IMR-90 (cell line): ENCODE measurements at regions of chr1 and their contacts with region 1.

Region 1: DNA sequence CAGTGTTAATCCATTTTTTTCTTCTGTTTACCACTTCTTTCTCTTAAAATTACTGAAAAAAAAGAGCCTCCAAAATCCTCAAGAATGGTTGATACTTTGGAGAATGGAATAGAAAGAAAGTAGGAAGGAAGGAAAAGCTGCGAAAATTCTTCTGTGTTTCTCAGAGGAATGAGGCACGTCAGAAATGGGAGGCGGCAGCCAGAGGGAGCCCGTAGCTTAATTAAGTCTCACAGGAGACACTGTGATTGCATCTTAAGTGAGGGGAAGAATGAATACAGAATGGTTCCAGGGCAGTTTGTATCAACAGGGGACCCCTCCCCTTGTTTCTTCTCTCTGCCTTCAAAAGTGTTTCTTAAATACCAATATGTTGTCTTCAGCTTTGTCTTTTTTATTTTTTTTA is 1099.5 kb downstream of the PLA2G4A start:
- DNase-seq: peak; percentile 36
- ATAC-seq: peak; percentile 57
- H3K4me3 ChIP-seq: no peak overlapping the region
- H3K27ac ChIP-seq: no peak overlapping the region
- H3K4me1 ChIP-seq: no peaks in the 10 kb centered on the region
- H3K27me3 ChIP-seq: no peaks in the 10 kb centered on the region
- CTCF ChIP-seq: peak; percentile 64
- POLR2A ChIP-seq: no peak
- RAD21 ChIP-seq: peak; percentile 71

Region 2: DNA sequence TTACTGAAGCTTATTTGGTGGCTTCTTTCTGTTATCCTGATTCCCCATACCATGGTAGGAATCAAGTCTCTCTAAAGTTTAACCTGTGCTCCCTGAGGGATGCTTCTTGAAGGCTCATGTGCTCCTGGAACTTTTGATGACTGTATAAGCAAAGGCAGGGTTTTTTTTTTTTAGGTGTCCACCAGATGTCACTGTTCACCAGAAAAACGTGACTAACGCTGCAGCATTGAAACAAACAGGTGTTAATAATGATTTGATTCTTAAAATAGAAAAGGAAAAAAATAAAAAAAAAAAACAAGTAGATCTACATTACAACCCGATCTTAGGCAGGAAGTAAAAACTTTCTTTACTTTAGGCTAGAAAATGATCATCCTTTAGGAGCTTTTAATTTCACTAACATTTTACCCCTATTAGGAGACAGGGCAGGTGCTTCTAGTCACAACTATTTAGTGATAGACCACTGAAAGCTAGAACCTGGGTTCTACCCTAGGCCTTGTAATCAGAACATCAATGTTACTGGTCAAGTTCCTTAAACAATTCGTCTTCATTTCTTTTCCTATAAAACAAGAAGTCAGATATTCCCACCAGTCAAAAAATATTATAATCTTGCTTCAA is 876.6 kb before region 1 on chr1:
- CTCF ChIA-PET with region 1: no interaction called
- POLR2A ChIA-PET with region 1: no interaction called
- dilution Hi-C with region 1: no loop called
- in situ Hi-C with region 1: no loop called
- intact Hi-C with region 1: loop called (anchors 5 kb)
- DNase-seq: peak; percentile 58
- ATAC-seq: no peak
- H3K4me3 ChIP-seq: no peak overlapping the region
- H3K27ac ChIP-seq: no peak overlapping the region
- H3K4me1 ChIP-seq: no peaks in the 10 kb centered on the region
- H3K27me3 ChIP-seq: peaks cover 1% of the 10 kb centered on the region; the same call in 1 of the 2 replicates
- CTCF ChIP-seq: peak; percentile 54
- POLR2A ChIP-seq: no peak
- RAD21 ChIP-seq: peak; percentile 67

Region 3: DNA sequence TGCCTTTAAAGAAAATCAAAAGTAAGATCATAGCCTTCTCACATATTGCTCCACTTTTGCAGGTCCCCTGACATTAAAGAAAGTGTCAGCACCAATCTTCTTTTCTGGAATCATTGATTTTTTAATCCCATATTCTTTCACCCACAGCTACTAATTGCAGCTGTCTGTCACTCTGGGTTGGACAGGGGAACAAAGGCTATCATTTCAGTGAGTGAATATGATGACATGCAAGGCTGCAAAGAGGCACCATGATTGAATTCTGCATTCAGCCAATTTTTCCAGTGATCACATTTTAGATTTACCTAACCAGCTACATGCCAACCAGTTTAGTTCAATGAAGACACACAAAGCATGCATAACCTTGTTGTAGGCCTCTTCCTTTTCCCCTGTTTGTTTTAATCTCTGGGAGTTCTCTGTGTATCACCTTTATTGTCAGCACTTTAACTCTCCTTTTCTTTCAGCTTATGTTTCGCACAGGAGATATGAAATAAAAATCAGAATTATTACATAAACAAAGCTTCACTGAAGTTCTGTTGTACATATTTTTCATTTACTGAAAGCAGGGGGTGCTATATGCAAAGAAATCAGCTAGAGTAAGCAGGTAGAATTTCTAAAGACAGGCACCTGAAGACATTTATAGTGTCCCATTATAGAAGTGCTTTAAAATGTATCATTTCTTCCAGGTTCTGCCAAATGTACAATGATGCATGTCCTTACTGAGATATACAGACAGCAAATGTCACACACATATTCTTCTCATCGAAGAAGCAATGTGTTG is 514.7 kb before region 1 on chr1:
- CTCF ChIA-PET with region 1: no interaction called
- POLR2A ChIA-PET with region 1: no interaction called
- dilution Hi-C with region 1: no loop called
- in situ Hi-C with region 1: no loop called
- intact Hi-C with region 1: loop called (anchors 10 kb)
- DNase-seq: peak; percentile 34
- ATAC-seq: no peak
- H3K4me3 ChIP-seq: no peak overlapping the region
- H3K27ac ChIP-seq: no peak overlapping the region
- H3K4me1 ChIP-seq: peaks cover 5% of the 10 kb centered on the region
- H3K27me3 ChIP-seq: no peaks in the 10 kb centered on the region
- CTCF ChIP-seq: peak; percentile 40
- POLR2A ChIP-seq: no peak
- RAD21 ChIP-seq: peak; percentile 66

Region 4: GRCh38 chr1:187476671-187477070 is 451.6 kb before region 1 on chr1:
- CTCF ChIA-PET with region 1: no interaction called
- POLR2A ChIA-PET with region 1: no interaction called
- dilution Hi-C with region 1: no loop called
- in situ Hi-C with region 1: no loop called
- intact Hi-C with region 1: loop called (anchors 10 kb)
- DNase-seq: peak; percentile 20
- ATAC-seq: 0 out of 2 replicates have a peak, but pooled peaks have one; percentile 53
- H3K4me3 ChIP-seq: no peak overlapping the region
- H3K27ac ChIP-seq: no peak overlapping the region
- H3K4me1 ChIP-seq: peaks cover 2% of the 10 kb centered on the region; the same call in 1 of the 2 replicates
- H3K27me3 ChIP-seq: no peaks in the 10 kb centered on the region
- CTCF ChIP-seq: peak; percentile 49
- POLR2A ChIP-seq: no peak
- RAD21 ChIP-seq: peak; percentile 43

Region 5: GRCh38 chr1:187971851-187972250 is 43.6 kb after region 1 on chr1:
- CTCF ChIA-PET with region 1: no interaction called
- POLR2A ChIA-PET with region 1: no interaction called
- dilution Hi-C with region 1: no loop called
- in situ Hi-C with region 1: no loop called
- intact Hi-C with region 1: no loop called
- DNase-seq: no peak
- ATAC-seq: no peak
- H3K4me3 ChIP-seq: no peak overlapping the region
- H3K27ac ChIP-seq: no peak overlapping the region
- H3K4me1 ChIP-seq: no peaks in the 10 kb centered on the region
- H3K27me3 ChIP-seq: no peaks in the 10 kb centered on the region
- CTCF ChIP-seq: no peak
- POLR2A ChIP-seq: no peak
- RAD21 ChIP-seq: no peak

Region 6: GRCh38 chr1:188128761-188129160 is 200.5 kb after region 1 on chr1:
- CTCF ChIA-PET with region 1: no interaction called
- POLR2A ChIA-PET with region 1: no interaction called
- dilution Hi-C with region 1: no loop called
- in situ Hi-C with region 1: no loop called
- intact Hi-C with region 1: loop called (anchors 2 kb)
- DNase-seq: peak; percentile 41
- ATAC-seq: peak; percentile 85
- H3K4me3 ChIP-seq: no peak overlapping the region
- H3K27ac ChIP-seq: no peak overlapping the region
- H3K4me1 ChIP-seq: no peaks in the 10 kb centered on the region
- H3K27me3 ChIP-seq: no peaks in the 10 kb centered on the region
- CTCF ChIP-seq: peak; percentile 46
- POLR2A ChIP-seq: no peak
- RAD21 ChIP-seq: peak; percentile 51